ENCODE measurements at regions of chr12 and their contacts with region 1.

Region 1: GRCh38 chr12:30978639-30979038 is 52.1 kb downstream of the TSPAN11 start:
- DNase-seq: no peak
- CTCF ChIP-seq: no peak

Region 2: GRCh38 chr12:30643366-30643765 is 335.3 kb before region 1 on chr12:
- CTCF ChIA-PET with region 1: no interaction called
- POLR2A ChIA-PET with region 1: interaction called, 11 read pairs
- DNase-seq: no peak
- CTCF ChIP-seq: no peak

Region 3: DNA sequence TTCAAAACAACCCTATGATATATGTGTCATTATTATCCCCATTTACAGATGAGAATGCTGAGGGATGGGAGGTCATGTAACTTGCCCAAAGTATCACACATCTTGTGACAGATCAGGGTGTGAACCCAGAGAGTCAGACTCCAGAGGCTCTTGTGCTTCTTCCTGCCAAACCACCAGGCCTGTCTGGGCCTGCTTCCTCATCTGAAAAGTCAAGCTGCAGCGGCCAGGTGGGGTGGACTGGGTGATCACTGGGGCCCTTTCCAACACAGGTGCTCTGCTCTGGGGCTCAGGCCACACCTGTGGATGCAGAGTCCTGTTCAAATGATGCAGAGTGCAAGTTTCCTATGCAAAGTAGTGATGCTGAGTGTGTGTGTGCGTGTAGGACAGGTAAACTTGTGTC is 25.4 kb before region 1 on chr12:
- CTCF ChIA-PET with region 1: no interaction called
- POLR2A ChIA-PET with region 1: no interaction called
- DNase-seq: no peak
- CTCF ChIP-seq: no peak